Prostate gland (tissue), 2 donors: ENCODE measurements at regions of chr6 and their contacts with region 1.

Region 1: DNA sequence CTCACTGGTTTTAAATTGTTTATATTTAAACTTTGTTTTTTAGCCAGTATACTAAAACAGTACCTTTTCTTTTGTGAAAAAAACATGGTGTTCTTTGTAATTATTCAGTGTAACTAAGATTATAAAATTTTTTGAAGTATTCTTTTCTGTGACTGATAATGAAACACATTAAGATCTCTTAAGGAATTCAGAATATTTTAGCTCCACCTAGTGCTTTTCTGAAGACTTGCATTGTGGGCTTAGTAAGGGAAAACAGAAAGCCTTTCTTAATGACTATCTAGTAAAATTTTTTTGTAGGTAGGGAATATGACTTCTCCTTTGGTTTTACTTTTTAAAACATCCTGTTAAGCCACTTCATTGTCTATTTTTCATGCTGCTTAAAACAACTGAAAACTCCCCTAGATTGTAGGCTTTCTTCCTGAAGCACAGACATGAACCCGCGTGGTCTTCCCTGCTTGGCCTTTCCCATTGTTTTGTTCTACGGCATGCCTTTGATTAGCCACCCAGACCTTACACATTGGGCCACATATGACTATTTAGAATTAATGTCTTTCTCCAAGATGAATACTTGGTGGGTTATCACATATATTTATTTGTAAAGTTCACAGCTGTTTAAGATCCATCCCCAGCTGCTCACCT is 72.1 kb downstream of the AFDN start:
- DNase-seq: no peak
- H3K4me3 ChIP-seq: no peak overlapping the region
- H3K27ac ChIP-seq: peak overlapping the region in 1 of 2 donors; percentile 15
- H3K4me1 ChIP-seq: peaks cover 5% of the 10 kb centered on the region
- H3K27me3 ChIP-seq: no peaks in the 10 kb centered on the region
- CTCF ChIP-seq: peak; percentile 57 to 91 (median 78)
- POLR2A ChIP-seq: no peak

Region 2: DNA sequence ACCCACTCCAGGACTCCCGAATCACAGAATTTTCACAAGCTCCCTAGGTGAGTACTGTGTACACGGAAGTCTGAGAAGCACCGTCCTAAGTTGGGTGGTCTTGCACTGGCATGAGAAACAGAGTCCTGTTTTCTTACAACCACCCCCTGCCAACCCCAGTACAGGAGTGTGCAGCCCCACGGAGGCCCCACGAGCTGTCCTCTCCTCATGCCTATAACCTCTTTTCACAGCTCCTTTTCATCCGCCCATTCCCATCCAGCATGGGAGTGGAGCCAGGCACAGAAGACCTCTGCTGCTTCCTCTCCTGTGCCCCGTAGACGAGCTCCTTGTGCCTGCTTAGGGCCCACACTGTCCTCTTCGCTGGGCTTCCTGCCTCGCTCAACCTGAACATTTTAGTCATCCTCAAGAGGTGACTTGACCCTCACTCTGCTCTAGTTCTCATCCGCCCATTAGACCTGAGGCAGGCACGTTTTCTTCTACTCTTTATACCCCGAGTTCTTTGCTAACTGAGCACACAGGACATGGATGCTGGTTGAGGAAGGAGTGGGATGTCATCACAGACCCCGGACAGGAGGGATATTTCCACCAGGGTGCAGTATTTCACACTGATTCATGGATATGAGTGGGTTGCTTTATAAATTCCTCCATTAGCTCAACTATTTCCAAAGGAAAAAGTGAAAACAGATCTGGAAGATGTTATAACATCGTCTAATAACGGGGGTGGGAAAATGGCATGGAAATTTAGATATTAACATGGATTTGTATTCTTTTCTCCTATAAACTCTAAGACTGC is 413.4 kb before region 1 on chr6:
- intact Hi-C with region 1: loop called (anchors 5 kb)
- DNase-seq: no peak
- H3K4me3 ChIP-seq: no peak overlapping the region
- H3K27ac ChIP-seq: no peak overlapping the region
- H3K4me1 ChIP-seq: peaks cover 2% of the 10 kb centered on the region
- H3K27me3 ChIP-seq: no peaks in the 10 kb centered on the region
- CTCF ChIP-seq: peak in 3 of 4 experiments; percentile 28 to 52 (median 37)
- POLR2A ChIP-seq: no peak

Region 3: GRCh38 chr6:167501781-167502385 is 396.9 kb before region 1 on chr6:
- intact Hi-C with region 1: loop called (anchors 2 kb)
- DNase-seq: peak; percentile 49
- H3K4me3 ChIP-seq: no peak overlapping the region
- H3K27ac ChIP-seq: no peak overlapping the region
- H3K4me1 ChIP-seq: no peaks in the 10 kb centered on the region
- H3K27me3 ChIP-seq: no peaks in the 10 kb centered on the region
- CTCF ChIP-seq: peak in 3 of 4 experiments; percentile 29 to 62 (median 53)
- POLR2A ChIP-seq: no peak

Region 4: GRCh38 chr6:167945937-167946485 is 47.2 kb after region 1 on chr6:
- intact Hi-C with region 1: no loop called
- DNase-seq: no peak
- H3K4me3 ChIP-seq: no peak overlapping the region
- H3K27ac ChIP-seq: no peak overlapping the region
- H3K4me1 ChIP-seq: no peaks in the 10 kb centered on the region
- H3K27me3 ChIP-seq: no peaks in the 10 kb centered on the region
- CTCF ChIP-seq: no peak
- POLR2A ChIP-seq: no peak